GM12878 (cell line): ENCODE measurements at regions of chr1 and their contacts with region 1.

Region 1: GRCh38 chr1:178749581-178750166 is 24.6 kb downstream of the RALGPS2 start:
- DNase-seq: no peak
- ATAC-seq: no peak
- H3K4me3 ChIP-seq: no peak overlapping the region
- H3K27ac ChIP-seq: no peak overlapping the region
- H3K4me1 ChIP-seq: no peaks in the 10 kb centered on the region
- H3K27me3 ChIP-seq: no peaks in the 10 kb centered on the region
- CTCF ChIP-seq: no peak
- EP300 ChIP-seq: no peak
- POLR2A ChIP-seq: no peak
- RAD21 ChIP-seq: no peak

Region 2: GRCh38 chr1:178532392-178532791 is 217.3 kb before region 1 on chr1:
- CTCF ChIA-PET with region 1: interaction called, 283 read pairs
- POLR2A ChIA-PET with region 1: no interaction called
- RAD21 ChIA-PET with region 1: interaction called, 6 read pairs
- SMC1A ChIA-PET with region 1: interaction called, 5 read pairs
- in situ Hi-C with region 1: loop called (anchors 25 kb)
- intact Hi-C with region 1: loop called (anchors 2 kb)
- DNase-seq: no peak
- ATAC-seq: peak; percentile 97
- H3K4me3 ChIP-seq: no peak overlapping the region
- H3K27ac ChIP-seq: no peak overlapping the region
- H3K4me1 ChIP-seq: no peaks in the 10 kb centered on the region
- H3K27me3 ChIP-seq: no peaks in the 10 kb centered on the region; a peak in 1 of 4 replicates
- CTCF ChIP-seq: peak; percentile 87 to 93 (median 89); a peak in 5 of 6 replicates
- EP300 ChIP-seq: no peak
- POLR2A ChIP-seq: no peak
- RAD21 ChIP-seq: peak; percentile 88

Region 3: GRCh38 chr1:178575611-178576331 is 173.9 kb before region 1 on chr1:
- CTCF ChIA-PET with region 1: interaction called, 11 read pairs
- POLR2A ChIA-PET with region 1: no interaction called
- RAD21 ChIA-PET with region 1: interaction called, 7 read pairs
- SMC1A ChIA-PET with region 1: interaction called, 6 read pairs
- in situ Hi-C with region 1: no loop called
- intact Hi-C with region 1: no loop called
- DNase-seq: peak; percentile 19
- ATAC-seq: peak; percentile 21; the same call in 1 of the 3 replicates
- H3K4me3 ChIP-seq: peak overlapping the region; percentile 34; the same call in 1 of the 2 replicates
- H3K27ac ChIP-seq: peak overlapping the region; percentile 9; the same call in 1 of the 2 replicates
- H3K4me1 ChIP-seq: peaks cover 61% of the 10 kb centered on the region
- H3K27me3 ChIP-seq: no peaks in the 10 kb centered on the region
- CTCF ChIP-seq: no peak
- EP300 ChIP-seq: no peak
- POLR2A ChIP-seq: no peak
- RAD21 ChIP-seq: no peak

Region 4: GRCh38 chr1:178664278-178664677 is 85.4 kb before region 1 on chr1:
- CTCF ChIA-PET with region 1: interaction called, 7 read pairs
- POLR2A ChIA-PET with region 1: no interaction called
- RAD21 ChIA-PET with region 1: interaction called, 11 read pairs
- SMC1A ChIA-PET with region 1: interaction called, 4 read pairs
- in situ Hi-C with region 1: no loop called
- intact Hi-C with region 1: no loop called
- DNase-seq: peak; percentile 79
- ATAC-seq: peak; percentile 80
- H3K4me3 ChIP-seq: no peak overlapping the region
- H3K27ac ChIP-seq: no peak overlapping the region
- H3K4me1 ChIP-seq: peaks cover 30% of the 10 kb centered on the region
- H3K27me3 ChIP-seq: no peaks in the 10 kb centered on the region
- CTCF ChIP-seq: no peak
- EP300 ChIP-seq: no peak
- POLR2A ChIP-seq: no peak
- RAD21 ChIP-seq: no peak

Region 5: GRCh38 chr1:178725603-178726517 is 23.8 kb before region 1 on chr1:
- CTCF ChIA-PET with region 1: interaction called, 5 read pairs
- POLR2A ChIA-PET with region 1: interaction called, 5 read pairs
- RAD21 ChIA-PET with region 1: interaction called, 10 read pairs
- SMC1A ChIA-PET with region 1: interaction called, 10 read pairs
- in situ Hi-C with region 1: no loop called
- intact Hi-C with region 1: no loop called
- DNase-seq: peak; percentile 32
- ATAC-seq: peak; percentile 75
- H3K4me3 ChIP-seq: peak overlapping the region; percentile 69
- H3K27ac ChIP-seq: no peak overlapping the region; the same call in 1 of the 2 replicates
- H3K4me1 ChIP-seq: no peaks in the 10 kb centered on the region
- H3K27me3 ChIP-seq: peaks cover 0 to 4% of the 10 kb centered on the region in 2 experiments; a peak in 2 of 4 replicates
- CTCF ChIP-seq: no peak
- EP300 ChIP-seq: no peak
- POLR2A ChIP-seq: no peak
- RAD21 ChIP-seq: no peak

Region 6: DNA sequence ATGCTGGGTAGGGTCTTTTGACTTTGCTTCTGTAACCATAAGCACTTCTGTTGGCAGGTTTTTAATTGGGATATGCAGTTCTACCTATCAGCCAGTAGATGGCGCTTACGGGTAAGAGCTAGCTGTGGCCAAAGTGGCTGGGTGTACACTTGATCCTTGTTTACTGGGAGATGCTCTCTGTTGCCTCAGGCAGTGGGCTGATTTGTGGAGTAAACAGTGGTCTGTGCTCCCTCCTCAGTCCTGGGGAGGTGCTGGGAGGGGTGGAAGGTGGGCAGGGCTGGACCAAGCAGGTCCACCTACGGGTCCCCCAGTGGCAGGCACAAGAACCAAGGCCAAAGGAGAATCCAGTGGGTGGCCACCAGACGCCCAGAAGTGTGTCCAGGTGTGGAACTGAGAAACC is 18.7 kb after region 1 on chr1:
- CTCF ChIA-PET with region 1: interaction called, 22 read pairs
- POLR2A ChIA-PET with region 1: no interaction called
- RAD21 ChIA-PET with region 1: interaction called, 3 read pairs
- SMC1A ChIA-PET with region 1: interaction called, 3 read pairs
- in situ Hi-C with region 1: no loop called
- intact Hi-C with region 1: no loop called
- DNase-seq: no peak
- ATAC-seq: peak; percentile 75
- H3K4me3 ChIP-seq: no peak overlapping the region
- H3K27ac ChIP-seq: no peak overlapping the region
- H3K4me1 ChIP-seq: no peaks in the 10 kb centered on the region
- H3K27me3 ChIP-seq: no peaks in the 10 kb centered on the region
- CTCF ChIP-seq: peak; percentile 75 to 81 (median 77)
- EP300 ChIP-seq: no peak
- POLR2A ChIP-seq: no peak
- RAD21 ChIP-seq: peak; percentile 64